ENCODE measurements at regions of chr5 and their contacts with region 1.

Region 1: DNA sequence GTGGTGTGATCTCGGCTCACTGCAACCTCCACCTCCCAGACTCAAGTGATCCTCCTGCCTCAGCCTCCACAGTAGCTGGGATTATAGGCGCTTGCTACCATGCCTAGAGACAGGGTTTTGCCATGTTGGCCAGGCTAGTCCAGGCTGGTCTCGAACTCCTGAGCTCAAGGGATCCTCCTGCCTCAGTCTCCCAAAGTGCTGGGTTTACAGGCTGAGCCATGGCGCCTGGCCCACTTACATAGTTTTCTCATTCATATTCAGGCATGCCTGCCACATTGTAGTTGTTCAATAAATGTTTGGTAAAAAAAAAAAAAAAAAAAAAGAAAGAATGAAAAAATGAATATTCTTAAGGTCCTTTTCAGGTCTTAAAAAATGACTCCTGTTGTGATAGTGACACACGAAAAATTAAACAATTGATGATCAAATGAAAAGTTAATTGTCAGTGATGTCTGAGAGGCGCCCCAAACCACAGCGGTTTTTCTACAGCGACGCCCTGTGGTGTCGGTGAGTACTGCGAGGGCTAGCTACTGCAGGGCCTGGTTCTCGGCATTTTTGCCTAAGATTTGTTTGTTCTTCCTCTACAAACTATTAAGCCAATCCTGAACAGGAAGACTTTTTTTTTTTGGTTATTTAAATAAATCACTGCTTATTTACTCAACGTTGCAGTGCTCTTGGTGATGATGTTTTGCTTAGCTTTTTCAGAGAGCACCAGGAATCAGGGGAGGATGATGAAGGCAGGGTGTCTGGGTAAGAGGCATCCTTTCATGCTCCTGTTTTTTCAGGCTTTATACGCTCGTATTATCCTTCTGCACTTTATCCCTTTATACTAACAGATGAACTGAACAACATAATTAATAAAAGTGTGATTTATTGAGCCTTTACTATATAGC is 67.0 kb upstream of the DPYSL3 start:
- DNase-seq: no peak
- ATAC-seq: peak; percentile 67

Region 2: DNA sequence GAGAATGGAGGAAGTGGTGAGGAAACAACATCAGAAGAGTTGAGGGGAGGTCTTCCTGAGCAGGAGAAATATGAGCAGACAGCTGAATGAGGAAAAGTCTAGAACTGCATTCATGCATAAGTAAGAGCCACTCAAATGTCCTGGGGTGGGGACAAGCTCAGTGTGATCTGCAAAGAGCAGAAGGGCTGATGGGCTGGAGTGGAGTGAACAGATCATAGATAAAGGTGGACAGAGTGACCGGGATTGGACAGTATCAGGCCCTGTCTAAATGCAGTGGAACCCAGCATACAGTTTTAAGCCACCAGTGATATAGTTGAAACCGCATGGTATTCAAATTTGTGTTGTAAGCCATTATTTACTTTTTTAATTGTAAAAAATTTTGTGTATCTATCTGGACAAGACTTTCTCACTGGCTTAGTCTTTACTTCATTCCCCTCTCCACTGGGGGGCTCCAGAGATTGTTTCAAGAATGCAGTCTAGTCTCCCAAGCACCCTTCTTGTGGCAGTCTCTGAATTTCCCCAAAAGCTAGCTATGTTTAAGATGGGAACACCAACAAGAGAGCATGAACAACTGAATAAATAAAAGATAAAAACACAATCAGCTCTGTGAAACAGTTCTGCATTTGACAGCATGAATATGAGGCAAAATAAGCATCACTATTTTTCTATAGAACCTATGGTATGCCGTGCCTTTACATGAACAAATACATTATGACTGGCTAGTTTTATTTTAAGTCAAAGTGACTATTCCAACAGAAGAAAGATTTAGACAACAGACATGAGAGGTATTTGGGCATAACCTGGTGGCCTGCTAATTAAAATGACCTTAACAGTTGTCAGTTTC is 352.7 kb before region 1 on chr5:
- intact Hi-C with region 1: loop called (anchors 2 kb)
- DNase-seq: no peak
- ATAC-seq: peak; percentile 65

Region 3: GRCh38 chr5:147453875-147454814 is 122.7 kb before region 1 on chr5:
- intact Hi-C with region 1: loop called (anchors 5 kb)
- DNase-seq: peak; percentile 93
- ATAC-seq: peak; percentile 89

Region 4: DNA sequence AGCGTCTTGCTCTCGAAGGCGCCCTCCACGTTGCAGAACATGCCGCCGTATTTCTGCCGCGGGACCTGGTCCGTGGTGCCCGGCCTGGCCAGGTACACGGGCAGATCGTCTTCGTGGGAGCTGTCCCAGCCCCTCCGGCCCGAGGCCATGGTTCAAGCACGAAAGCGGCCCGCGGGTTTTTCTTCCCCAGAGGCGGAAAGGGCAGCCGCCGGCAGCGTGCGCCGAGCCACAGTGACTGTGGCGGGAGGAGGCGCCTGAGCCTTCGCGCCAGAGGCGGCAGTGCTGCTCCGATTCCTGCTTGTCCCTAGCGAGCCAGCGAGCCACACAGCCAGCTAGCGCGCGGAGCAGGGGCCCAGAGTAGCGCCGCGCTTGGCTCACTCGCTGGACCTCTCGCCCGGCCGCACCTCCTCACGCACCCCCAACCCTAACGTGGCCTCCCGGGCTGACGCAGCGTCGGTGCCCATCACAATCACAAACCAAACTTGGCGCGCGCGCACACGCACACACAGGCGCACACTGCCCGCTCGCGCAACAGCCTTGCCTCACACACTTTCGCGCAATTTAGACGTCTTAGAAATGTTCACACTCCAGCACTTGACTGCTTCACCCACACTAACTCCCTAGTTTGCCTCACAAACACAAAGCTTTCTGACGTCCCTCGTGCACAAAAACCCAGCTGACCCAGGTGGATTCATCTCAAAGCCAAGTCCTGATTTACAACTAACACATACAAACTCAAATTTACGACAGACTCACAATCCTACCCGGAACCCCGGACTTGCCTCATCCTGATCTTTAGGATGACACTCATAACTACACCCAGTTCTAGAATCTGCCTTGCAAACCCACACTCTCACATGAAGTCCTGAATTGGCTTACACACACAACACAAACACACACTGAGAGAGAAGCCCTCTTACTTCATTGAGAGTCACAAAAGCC is 66.9 kb before region 1 on chr5 and contains the start of gene DPYSL3:
- intact Hi-C with region 1: loop called (anchors 5 kb)
- DNase-seq: peak; percentile 88
- ATAC-seq: peak; percentile 96
- total RNA-seq, gene DPYSL3: 22.1 TPM

Region 5: DNA sequence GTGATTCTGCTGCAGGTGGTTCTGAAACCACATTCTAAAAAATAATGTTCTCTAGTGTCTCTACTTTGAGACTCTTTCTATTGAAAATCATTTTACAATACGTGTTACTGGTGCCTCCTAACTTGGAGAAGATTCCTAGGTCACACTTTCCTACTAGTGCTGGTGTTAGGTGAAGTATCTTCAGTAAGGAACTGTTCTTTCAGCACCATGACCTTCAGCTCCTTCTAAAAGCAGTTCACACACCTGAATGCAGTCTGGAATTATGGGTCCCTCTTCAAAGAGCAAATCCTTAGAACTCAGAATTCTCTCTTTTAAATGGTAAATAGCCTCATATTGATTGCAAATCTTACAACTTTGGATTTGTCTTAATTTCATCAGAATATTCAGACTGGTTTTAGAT is 56.4 kb before region 1 on chr5:
- intact Hi-C with region 1: no loop called
- DNase-seq: no peak
- ATAC-seq: no peak

Region 6: GRCh38 chr5:147530530-147531389 is 46.1 kb before region 1 on chr5:
- intact Hi-C with region 1: no loop called
- DNase-seq: no peak
- ATAC-seq: no peak

Region 7: GRCh38 chr5:147756566-147756965 is 179.7 kb after region 1 on chr5:
- intact Hi-C with region 1: no loop called
- DNase-seq: no peak
- ATAC-seq: no peak